ENCODE measurements at regions of chr6 and their contacts with region 1.

Region 1: GRCh38 chr6:130697995-130698535 is 129.1 kb upstream of the SMLR1 start:
- DNase-seq: peak; percentile 47 to 54 (median 53)
- H3K4me3 ChIP-seq: no peak overlapping the region
- H3K4me3 Mint-ChIP-seq: peak overlapping the region in 7 of 8 donors; percentile 36 to 65 (median 48)
- H3K27ac ChIP-seq: no peak overlapping the region
- H3K27ac Mint-ChIP-seq: no peak overlapping the region
- H3K4me1 ChIP-seq: peaks cover 27% of the 10 kb centered on the region
- H3K4me1 Mint-ChIP-seq: peaks cover 26 to 46% (median 30%) of the 10 kb centered on the region in 4 donors
- H3K27me3 ChIP-seq: no peaks in the 10 kb centered on the region
- H3K27me3 Mint-ChIP-seq: no peaks in the 10 kb centered on the region

Region 2: DNA sequence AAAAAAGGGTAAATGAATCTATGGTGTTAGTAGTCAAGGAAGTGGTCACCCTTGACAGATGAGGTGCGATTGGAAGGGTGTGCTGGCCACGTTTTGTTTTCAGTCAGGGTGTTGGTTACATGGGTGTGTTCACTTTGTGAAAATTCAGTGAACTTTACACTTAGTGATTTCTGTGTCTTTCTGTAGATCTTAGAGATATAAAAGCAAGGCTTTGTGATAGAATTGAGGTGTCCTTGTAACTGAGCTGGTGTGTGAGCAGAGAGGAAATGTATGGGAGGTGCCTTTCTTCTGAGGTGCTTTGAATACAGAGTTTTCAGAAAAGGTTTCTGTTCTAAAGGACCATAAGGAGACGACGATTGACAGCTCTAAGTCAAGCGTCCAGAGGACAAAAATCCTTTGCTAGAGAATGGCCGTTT is 565.8 kb before region 1 on chr6:
- CTCF ChIA-PET with region 1: interaction called, 6 read pairs
- POLR2A ChIA-PET with region 1: no interaction called
- intact Hi-C with region 1: loop called (anchors 5 kb)
- DNase-seq: peak; percentile 74 to 91 (median 86)
- H3K4me3 ChIP-seq: peak overlapping the region in 1 of 2 donors; percentile 21
- H3K4me3 Mint-ChIP-seq: peak overlapping the region; percentile 53 to 87 (median 74)
- H3K27ac ChIP-seq: peak overlapping the region; percentile 50
- H3K27ac Mint-ChIP-seq: peak overlapping the region; percentile 82 to 97 (median 96)
- H3K4me1 ChIP-seq: peaks cover 72% of the 10 kb centered on the region
- H3K4me1 Mint-ChIP-seq: peaks cover 66 to 93% (median 73%) of the 10 kb centered on the region in 4 donors
- H3K27me3 ChIP-seq: no peaks in the 10 kb centered on the region
- H3K27me3 Mint-ChIP-seq: no peaks in the 10 kb centered on the region

Region 3: GRCh38 chr6:130365166-130366106 is 332.6 kb before region 1 on chr6 and contains the start of gene TMEM200A:
- CTCF ChIA-PET with region 1: interaction called, 22 read pairs
- POLR2A ChIA-PET with region 1: interaction called, 7 read pairs
- intact Hi-C with region 1: loop called (anchors 1 kb)
- DNase-seq: peak; percentile 34 to 52 (median 36)
- H3K4me3 ChIP-seq: peak within 1 kb of the TSS in 1 of 2 donors; percentile 66
- H3K4me3 Mint-ChIP-seq: peak within 1 kb of the TSS; percentile 83 to 96 (median 87)
- H3K27ac ChIP-seq: peak within 1 kb of the TSS; percentile 55
- H3K27ac Mint-ChIP-seq: peak within 1 kb of the TSS in 6 of 7 donors; percentile 13 to 92 (median 64)
- H3K4me1 ChIP-seq: peaks cover 34% of the 10 kb centered on the region
- H3K4me1 Mint-ChIP-seq: peaks cover 20 to 37% (median 31%) of the 10 kb centered on the region in 4 donors
- H3K27me3 ChIP-seq: no peaks in the 10 kb centered on the region
- H3K27me3 Mint-ChIP-seq: no peaks in the 10 kb centered on the region
- total RNA-seq, gene TMEM200A: 1.1 to 1.2 TPM

Region 4: GRCh38 chr6:130500693-130501092 is 197.4 kb before region 1 on chr6:
- CTCF ChIA-PET with region 1: interaction called, 3 read pairs
- POLR2A ChIA-PET with region 1: no interaction called
- intact Hi-C with region 1: loop called (anchors 10 kb)
- DNase-seq: no peak
- H3K4me3 ChIP-seq: no peak overlapping the region
- H3K4me3 Mint-ChIP-seq: no peak overlapping the region
- H3K27ac ChIP-seq: no peak overlapping the region
- H3K27ac Mint-ChIP-seq: no peak overlapping the region
- H3K4me1 ChIP-seq: peaks cover 6% of the 10 kb centered on the region
- H3K4me1 Mint-ChIP-seq: peaks cover 3 to 15% (median 13%) of the 10 kb centered on the region in 4 donors
- H3K27me3 ChIP-seq: no peaks in the 10 kb centered on the region
- H3K27me3 Mint-ChIP-seq: no peaks in the 10 kb centered on the region

Region 5: DNA sequence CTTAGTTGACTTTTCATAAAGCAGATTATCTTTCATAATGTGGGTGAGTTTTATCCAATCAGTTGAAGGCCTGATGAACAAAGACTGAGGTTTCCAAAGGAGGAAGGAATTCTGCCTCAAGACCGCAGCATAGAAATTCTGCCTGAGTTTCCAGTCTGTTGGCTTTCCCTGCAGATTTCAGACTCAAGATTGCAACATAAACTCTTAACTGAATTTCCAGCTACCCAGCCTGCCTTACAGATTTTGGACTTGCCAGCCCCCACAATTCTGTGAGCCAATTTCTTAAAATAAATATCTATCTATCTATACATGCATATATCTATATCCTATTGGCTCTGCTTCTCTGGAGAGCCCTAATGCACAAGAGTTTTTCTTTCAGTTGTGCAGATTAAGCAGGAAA is 71.8 kb after region 1 on chr6:
- CTCF ChIA-PET with region 1: no interaction called
- POLR2A ChIA-PET with region 1: no interaction called
- intact Hi-C with region 1: no loop called
- DNase-seq: no peak
- H3K4me3 ChIP-seq: no peak overlapping the region
- H3K4me3 Mint-ChIP-seq: no peak overlapping the region
- H3K27ac ChIP-seq: no peak overlapping the region
- H3K27ac Mint-ChIP-seq: no peak overlapping the region
- H3K4me1 ChIP-seq: no peaks in the 10 kb centered on the region
- H3K4me1 Mint-ChIP-seq: no peaks in the 10 kb centered on the region
- H3K27me3 ChIP-seq: no peaks in the 10 kb centered on the region
- H3K27me3 Mint-ChIP-seq: peaks cover 0 to 2% of the 10 kb centered on the region in 2 donors

Region 6: DNA sequence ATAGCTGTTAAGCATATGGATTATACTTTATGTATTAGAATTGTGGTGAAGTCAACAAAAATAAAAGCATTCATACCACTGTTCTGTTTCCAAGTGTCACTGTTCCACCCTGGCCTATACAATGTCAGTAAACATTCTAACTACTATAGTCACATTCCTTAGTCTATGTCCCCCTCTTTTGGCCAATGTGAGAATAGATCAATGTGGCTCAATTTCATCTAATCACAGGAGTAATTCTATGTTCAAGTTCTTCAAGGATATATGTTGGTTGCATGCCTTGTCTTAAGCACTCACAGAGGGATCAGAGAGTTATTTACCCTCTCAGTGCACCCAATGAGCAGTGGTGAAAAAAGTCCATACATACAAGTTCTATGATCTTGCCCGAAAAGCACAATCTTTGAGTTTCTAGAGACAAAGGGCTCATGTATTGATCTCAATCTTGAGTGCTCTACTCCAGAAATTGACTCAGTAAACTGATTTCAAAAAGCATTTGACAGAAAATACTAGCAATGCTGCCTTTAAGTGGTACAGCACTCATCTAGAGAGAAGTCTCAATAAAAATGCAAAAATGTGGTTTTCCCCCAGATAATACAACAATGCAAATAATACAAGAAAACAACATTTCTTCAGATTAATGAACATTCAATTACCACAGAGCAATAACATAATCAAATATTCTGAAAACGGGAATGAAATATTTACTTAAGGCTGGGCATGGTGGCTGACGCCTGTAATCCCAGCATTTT is 145.7 kb after region 1 on chr6:
- CTCF ChIA-PET with region 1: interaction called, 5 read pairs
- POLR2A ChIA-PET with region 1: no interaction called
- intact Hi-C with region 1: loop called (anchors 1 kb)
- DNase-seq: peak in 4 of 5 donors; percentile 50 to 62 (median 60)
- H3K4me3 ChIP-seq: no peak overlapping the region
- H3K4me3 Mint-ChIP-seq: no peak overlapping the region
- H3K27ac ChIP-seq: no peak overlapping the region
- H3K27ac Mint-ChIP-seq: no peak overlapping the region
- H3K4me1 ChIP-seq: peaks cover under 1% of the 10 kb centered on the region
- H3K4me1 Mint-ChIP-seq: peaks cover 2 to 7% (median 5%) of the 10 kb centered on the region in 4 donors
- H3K27me3 ChIP-seq: no peaks in the 10 kb centered on the region
- H3K27me3 Mint-ChIP-seq: no peaks in the 10 kb centered on the region

Measured in CD4-positive, alpha-beta memory T cell (primary cell).